ENCODE measurements at regions of chr10 and their contacts with region 1.

Region 1: GRCh38 chr10:35563261-35563891 is 41.8 kb upstream of the GJD4 start:
- DNase-seq: peak; percentile 88
- H3K4me3 ChIP-seq: no peak overlapping the region
- H3K27ac ChIP-seq: no peak overlapping the region
- H3K4me1 ChIP-seq: peaks cover 15% of the 10 kb centered on the region
- H3K27me3 ChIP-seq: no peaks in the 10 kb centered on the region
- CTCF ChIP-seq: peak; percentile 100

Region 2: GRCh38 chr10:35236739-35237138 is 326.6 kb before region 1 on chr10:
- CTCF ChIA-PET with region 1: interaction called, 3 read pairs
- POLR2A ChIA-PET with region 1: no interaction called
- intact Hi-C with region 1: loop called (anchors 10 kb)
- DNase-seq: peak; percentile 66
- H3K4me3 ChIP-seq: no peak overlapping the region
- H3K27ac ChIP-seq: peak overlapping the region; percentile 40
- H3K4me1 ChIP-seq: peaks cover 16% of the 10 kb centered on the region
- H3K27me3 ChIP-seq: no peaks in the 10 kb centered on the region
- CTCF ChIP-seq: peak; percentile 65

Region 3: GRCh38 chr10:35259769-35260397 is 303.5 kb before region 1 on chr10:
- CTCF ChIA-PET with region 1: interaction called, 16 read pairs
- POLR2A ChIA-PET with region 1: no interaction called
- intact Hi-C with region 1: no loop called
- DNase-seq: peak; percentile 51
- H3K4me3 ChIP-seq: no peak overlapping the region
- H3K27ac ChIP-seq: peak overlapping the region; percentile 40
- H3K4me1 ChIP-seq: no peaks in the 10 kb centered on the region
- H3K27me3 ChIP-seq: no peaks in the 10 kb centered on the region
- CTCF ChIP-seq: no peak

Region 4: GRCh38 chr10:35336084-35336831 is 227.1 kb before region 1 on chr10 and contains the start of gene CCNY:
- CTCF ChIA-PET with region 1: interaction called, 5 read pairs
- POLR2A ChIA-PET with region 1: no interaction called
- intact Hi-C with region 1: loop called (anchors 5 kb)
- DNase-seq: peak; percentile 85
- H3K4me3 ChIP-seq: peak within 1 kb of the TSS; percentile 91
- H3K27ac ChIP-seq: peak within 1 kb of the TSS; percentile 88
- H3K4me1 ChIP-seq: peaks cover 50% of the 10 kb centered on the region
- H3K27me3 ChIP-seq: no peaks in the 10 kb centered on the region
- CTCF ChIP-seq: no peak
- total RNA-seq, gene CCNY: 84.8 and 85.8 TPM in 2 replicates

Region 5: DNA sequence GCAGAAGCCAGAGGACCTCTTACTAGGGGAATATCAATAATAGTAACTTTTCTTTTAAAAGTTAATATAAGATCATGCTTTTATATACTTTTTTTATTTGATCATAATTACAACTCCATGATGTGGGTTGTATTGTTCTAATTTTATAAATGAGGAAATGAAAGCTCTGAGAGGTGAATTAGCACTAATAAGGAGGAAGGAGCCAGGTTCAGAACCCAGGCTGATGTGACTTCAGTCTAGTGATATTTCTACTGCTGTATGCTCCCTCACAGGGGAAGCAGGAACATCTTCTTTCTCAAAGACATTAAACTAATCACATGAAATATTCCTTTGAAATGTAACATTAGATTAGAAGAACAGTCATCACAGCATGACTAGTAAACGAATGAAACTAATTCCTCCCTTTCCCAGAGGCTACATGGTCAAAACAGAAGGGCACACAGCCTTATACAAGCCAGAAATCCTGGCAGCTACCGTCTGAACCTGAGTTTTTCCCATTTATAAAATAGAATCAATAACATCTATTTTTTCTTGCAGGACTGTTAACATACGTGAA is 39.6 kb before region 1 on chr10:
- CTCF ChIA-PET with region 1: no interaction called
- POLR2A ChIA-PET with region 1: no interaction called
- intact Hi-C with region 1: no loop called
- DNase-seq: no peak
- H3K4me3 ChIP-seq: no peak overlapping the region
- H3K27ac ChIP-seq: no peak overlapping the region
- H3K4me1 ChIP-seq: no peaks in the 10 kb centered on the region
- H3K27me3 ChIP-seq: no peaks in the 10 kb centered on the region
- CTCF ChIP-seq: no peak

Measured in A673 (cell line).